Ascending aorta (tissue), 2 donors: ENCODE measurements at regions of chr6 and their contacts with region 1.

Region 1: GRCh38 chr6:26122793-26123674 is 35.8 kb downstream of the HFE start:
- DNase-seq: peak; percentile 88 to 98
- H3K4me3 ChIP-seq: peak overlapping the region; percentile 72 to 95
- H3K27ac ChIP-seq: peak overlapping the region; percentile 90 to 98
- H3K4me1 ChIP-seq: peaks cover 0 to 16% of the 10 kb centered on the region in 2 donors
- H3K27me3 ChIP-seq: no peaks in the 10 kb centered on the region
- CTCF ChIP-seq: no peak

Region 2: DNA sequence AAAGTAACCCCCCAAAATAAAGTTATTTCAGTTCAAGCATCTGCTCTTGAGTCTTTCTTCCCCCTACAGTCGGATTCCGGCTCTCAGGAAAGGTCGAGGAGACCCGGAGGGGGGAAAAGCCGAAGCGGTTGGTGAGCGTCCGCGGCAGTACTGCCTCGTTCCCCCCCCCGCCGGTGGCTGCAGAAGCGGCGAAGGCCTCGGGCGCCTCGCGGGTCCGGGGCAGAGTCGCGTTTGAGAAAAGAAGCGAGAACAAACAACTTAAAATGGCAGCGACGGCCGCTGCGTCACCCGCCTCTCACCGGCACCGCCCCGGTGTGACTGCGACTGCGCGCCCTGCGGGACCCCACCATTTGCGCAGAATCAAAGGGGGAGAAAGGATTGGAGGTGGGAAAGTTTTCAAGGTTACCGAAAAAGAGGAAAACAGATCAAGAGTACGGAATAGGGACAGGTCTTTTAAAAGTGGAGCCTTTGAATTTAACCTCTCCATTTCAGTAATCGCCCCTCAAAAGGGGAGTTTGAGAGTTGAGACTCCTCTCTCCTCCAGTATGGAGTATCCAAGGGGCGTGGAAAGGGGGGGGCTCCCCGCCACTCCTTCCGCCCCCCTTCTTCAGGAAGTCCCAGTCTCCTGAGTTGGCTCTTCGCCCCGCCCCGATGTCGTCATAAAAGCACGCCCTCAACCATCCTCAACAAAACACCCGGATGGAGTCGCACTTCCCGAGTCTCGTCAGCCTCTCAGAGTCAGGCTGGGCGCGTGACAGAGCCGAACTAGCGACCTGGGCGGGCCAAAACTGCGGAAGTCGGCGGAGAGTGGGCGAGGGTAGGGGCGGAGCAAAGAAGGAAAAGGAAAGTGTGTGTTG is 1402.2 kb before region 1 on chr6:
- intact Hi-C with region 1: loop called (anchors 2 kb)
- DNase-seq: peak; percentile 100
- H3K4me3 ChIP-seq: peak overlapping the region; percentile 86 to 92
- H3K27ac ChIP-seq: peak overlapping the region; percentile 96 to 99
- H3K4me1 ChIP-seq: peaks cover 4 to 15% of the 10 kb centered on the region in 2 donors
- H3K27me3 ChIP-seq: no peaks in the 10 kb centered on the region
- CTCF ChIP-seq: peak in 1 of 3 experiments; percentile 11

Region 3: DNA sequence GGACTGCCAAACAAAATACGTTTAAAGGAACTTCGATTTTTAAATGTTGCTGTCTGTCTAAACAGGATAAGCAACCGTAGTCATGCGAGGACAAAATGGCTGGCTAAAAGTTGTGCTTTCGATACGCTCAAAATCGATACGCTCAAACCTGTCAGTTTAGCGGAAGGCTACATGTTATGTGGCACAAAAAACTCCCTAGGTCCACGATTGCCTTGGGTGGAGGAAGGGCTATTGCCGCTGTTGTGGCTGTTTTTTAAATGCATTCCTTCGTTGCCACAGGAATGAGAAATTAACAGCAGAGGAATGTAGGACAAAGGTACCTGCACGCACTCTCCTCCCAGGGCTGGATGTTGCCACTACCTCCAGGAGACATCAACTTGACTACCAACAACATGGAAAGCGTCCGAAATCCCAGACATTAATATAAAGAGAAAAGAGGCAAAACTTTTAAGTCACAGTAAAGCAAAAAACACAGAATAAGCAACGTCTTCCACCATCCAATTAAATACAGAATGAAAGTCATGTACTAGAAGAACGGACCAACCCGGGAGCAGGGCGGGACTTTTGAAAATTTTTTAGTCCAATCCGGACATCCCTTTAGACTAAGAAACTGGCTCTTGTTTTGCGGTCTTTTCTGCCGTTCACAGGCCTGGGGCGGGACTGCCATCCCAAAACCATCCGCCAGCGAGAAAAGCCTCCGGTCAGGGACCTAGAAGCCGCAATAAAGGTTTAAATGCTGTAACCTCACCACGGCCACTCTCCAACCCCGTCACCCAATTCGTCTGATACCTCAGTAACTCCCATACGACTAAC is 68.0 kb before region 1 on chr6:
- intact Hi-C with region 1: loop called (anchors 2 kb)
- DNase-seq: peak; percentile 68 to 96
- H3K4me3 ChIP-seq: peak overlapping the region; percentile 74 to 80
- H3K27ac ChIP-seq: peak overlapping the region; percentile 92 to 94
- H3K4me1 ChIP-seq: peaks cover 0 to 7% of the 10 kb centered on the region in 2 donors
- H3K27me3 ChIP-seq: no peaks in the 10 kb centered on the region
- CTCF ChIP-seq: peak in 2 of 3 experiments; percentile 23 to 36

Region 4: GRCh38 chr6:26156076-26156849 is 33.2 kb after region 1 on chr6:
- intact Hi-C with region 1: loop called (anchors 1 kb)
- DNase-seq: peak; percentile 67 to 95
- H3K4me3 ChIP-seq: peak overlapping the region; percentile 86 to 91
- H3K27ac ChIP-seq: peak overlapping the region; percentile 98 to 99
- H3K4me1 ChIP-seq: peaks cover 0 to 14% of the 10 kb centered on the region in 2 donors
- H3K27me3 ChIP-seq: no peaks in the 10 kb centered on the region
- CTCF ChIP-seq: peak in 1 of 3 experiments; percentile 24

Region 5: GRCh38 chr6:26196846-26197648 is 74.0 kb after region 1 on chr6:
- intact Hi-C with region 1: loop called (anchors 2 kb)
- DNase-seq: peak; percentile 64 to 91
- H3K4me3 ChIP-seq: peak overlapping the region; percentile 62 to 86
- H3K27ac ChIP-seq: peak overlapping the region; percentile 92 to 95
- H3K4me1 ChIP-seq: peaks cover 4 to 13% of the 10 kb centered on the region in 2 donors
- H3K27me3 ChIP-seq: no peaks in the 10 kb centered on the region
- CTCF ChIP-seq: no peak

Region 6: GRCh38 chr6:26285143-26286134 is 162.4 kb after region 1 on chr6:
- intact Hi-C with region 1: loop called (anchors 1 kb)
- DNase-seq: peak; percentile 92 to 99
- H3K4me3 ChIP-seq: peak overlapping the region; percentile 71 to 79
- H3K27ac ChIP-seq: peak overlapping the region; percentile 93 to 97
- H3K4me1 ChIP-seq: no peaks in the 10 kb centered on the region
- H3K27me3 ChIP-seq: no peaks in the 10 kb centered on the region
- CTCF ChIP-seq: no peak

Region 7: GRCh38 chr6:26473758-26474438 is 350.9 kb after region 1 on chr6:
- intact Hi-C with region 1: no loop called
- DNase-seq: peak; percentile 68 to 92
- H3K4me3 ChIP-seq: peak overlapping the region; percentile 57 to 64
- H3K27ac ChIP-seq: peak overlapping the region; percentile 91
- H3K4me1 ChIP-seq: peaks cover 6 to 9% of the 10 kb centered on the region in 2 donors
- H3K27me3 ChIP-seq: no peaks in the 10 kb centered on the region
- CTCF ChIP-seq: no peak